ENCODE measurements at regions of chr2 and their contacts with region 1.

Region 1: GRCh38 chr2:51505533-51505932 is 473.6 kb upstream of the NRXN1 start:
- DNase-seq: no peak
- H3K4me3 ChIP-seq: no peak overlapping the region
- H3K27ac ChIP-seq: no peak overlapping the region
- H3K4me1 ChIP-seq: peaks cover 13% of the 10 kb centered on the region
- H3K27me3 ChIP-seq: no peaks in the 10 kb centered on the region
- CTCF ChIP-seq: no peak
- POLR2A ChIP-seq: no peak

Region 2: GRCh38 chr2:51413726-51414125 is 91.8 kb before region 1 on chr2:
- CTCF ChIA-PET with region 1: no interaction called
- POLR2A ChIA-PET with region 1: no interaction called
- dilution Hi-C with region 1: no loop called
- intact Hi-C with region 1: no loop called
- DNase-seq: no peak
- H3K4me3 ChIP-seq: no peak overlapping the region
- H3K27ac ChIP-seq: no peak overlapping the region
- H3K4me1 ChIP-seq: no peaks in the 10 kb centered on the region
- H3K27me3 ChIP-seq: no peaks in the 10 kb centered on the region
- CTCF ChIP-seq: no peak
- POLR2A ChIP-seq: no peak

Region 3: GRCh38 chr2:51624995-51625394 is 119.5 kb after region 1 on chr2:
- CTCF ChIA-PET with region 1: no interaction called
- POLR2A ChIA-PET with region 1: no interaction called
- dilution Hi-C with region 1: no loop called
- intact Hi-C with region 1: loop called (anchors 5 kb)
- DNase-seq: peak; percentile 10
- H3K4me3 ChIP-seq: no peak overlapping the region
- H3K27ac ChIP-seq: no peak overlapping the region
- H3K4me1 ChIP-seq: peaks cover 9% of the 10 kb centered on the region
- H3K27me3 ChIP-seq: no peaks in the 10 kb centered on the region
- CTCF ChIP-seq: no peak
- POLR2A ChIP-seq: no peak

Region 4: GRCh38 chr2:51995293-51995692 is 489.8 kb after region 1 on chr2:
- CTCF ChIA-PET with region 1: no interaction called
- POLR2A ChIA-PET with region 1: no interaction called
- dilution Hi-C with region 1: no loop called
- intact Hi-C with region 1: loop called (anchors 5 kb)
- DNase-seq: peak; percentile 3
- H3K4me3 ChIP-seq: no peak overlapping the region
- H3K27ac ChIP-seq: peak overlapping the region; percentile 80
- H3K4me1 ChIP-seq: peaks cover 23% of the 10 kb centered on the region
- H3K27me3 ChIP-seq: no peaks in the 10 kb centered on the region
- CTCF ChIP-seq: no peak
- POLR2A ChIP-seq: no peak

Measured in endothelial cell of umbilical vein (primary cell).